ENCODE measurements at regions of chr5 and their contacts with region 1.

Region 1: GRCh38 chr5:849651-850301 is 1.0 kb downstream of the ZDHHC11 start:
- DNase-seq: peak in 4 of 5 donors; percentile 46 to 74 (median 47)
- ATAC-seq: peak; percentile 58 to 88 (median 88)
- H3K4me3 ChIP-seq: peak overlapping the region in 9 of 12 donors; percentile 11 to 42 (median 32)
- H3K27ac ChIP-seq: peak overlapping the region in 5 of 12 donors; percentile 10 to 47 (median 22)
- H3K4me1 ChIP-seq: peaks cover 0 to 11% (median 0%) of the 10 kb centered on the region in 12 donors
- H3K27me3 ChIP-seq: peaks cover 0 to 17% (median 0%) of the 10 kb centered on the region in 9 donors
- CTCF ChIP-seq: no peak
- POLR2A ChIP-seq: no peak

Region 2: DNA sequence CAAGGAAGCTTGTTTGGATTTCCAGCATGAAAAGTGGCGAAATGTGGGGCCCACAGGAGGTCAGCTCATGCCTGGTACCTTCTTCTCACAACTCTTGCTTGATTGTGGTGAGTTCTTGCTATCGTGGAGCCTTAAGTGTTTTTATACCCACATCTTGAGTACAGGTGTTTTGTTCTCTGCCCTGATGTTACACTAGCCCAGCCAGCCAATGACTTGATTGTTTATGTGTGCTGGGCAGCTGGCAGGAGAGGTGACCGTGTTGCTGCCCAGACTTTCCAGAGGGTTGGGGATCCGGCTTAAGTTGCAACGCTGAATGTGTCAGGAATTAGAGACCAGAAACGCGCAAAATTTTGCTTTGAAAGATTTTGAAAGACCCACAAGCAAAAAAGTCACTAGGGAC is 132.6 kb before region 1 on chr5:
- intact Hi-C with region 1: no loop called
- DNase-seq: no peak
- ATAC-seq: no peak
- H3K4me3 ChIP-seq: no peak overlapping the region
- H3K27ac ChIP-seq: no peak overlapping the region
- H3K4me1 ChIP-seq: no peaks in the 10 kb centered on the region
- H3K27me3 ChIP-seq: no peaks in the 10 kb centered on the region
- CTCF ChIP-seq: no peak
- POLR2A ChIP-seq: no peak

Region 3: DNA sequence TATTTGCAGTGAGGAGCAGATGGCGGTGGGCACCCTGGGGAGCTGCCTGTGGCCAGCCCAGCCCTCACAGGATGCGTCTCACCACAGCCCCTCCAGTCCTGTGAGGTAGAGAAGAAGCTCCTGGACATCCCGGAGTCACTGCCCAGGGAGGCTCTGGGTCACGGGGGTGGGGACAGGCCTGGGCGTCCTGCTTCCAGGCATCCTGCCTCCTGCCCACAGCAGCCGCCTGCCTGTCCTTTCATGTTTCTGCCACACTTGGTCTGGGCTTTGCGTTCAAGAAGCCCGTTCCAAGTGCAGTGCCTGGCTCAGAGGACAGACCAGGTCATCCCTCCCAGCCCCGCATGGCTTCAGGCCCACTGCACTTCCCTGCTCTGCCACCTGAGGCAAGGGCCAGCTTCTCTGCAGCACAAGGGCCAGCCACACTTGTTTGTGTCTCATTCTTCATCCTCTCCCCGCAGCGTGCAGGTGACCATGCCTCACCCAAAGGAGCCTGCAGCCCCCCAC is 103.5 kb before region 1 on chr5:
- intact Hi-C with region 1: loop called in 4 of 10 experiments (anchors 5 to 10 kb)
- DNase-seq: peak in 3 of 5 donors; percentile 68 to 77 (median 68)
- ATAC-seq: peak; percentile 45 to 87 (median 73)
- H3K4me3 ChIP-seq: no peak overlapping the region
- H3K27ac ChIP-seq: peak overlapping the region in 5 of 12 donors; percentile 2 to 70 (median 53)
- H3K4me1 ChIP-seq: peaks cover 0 to 12% (median 0%) of the 10 kb centered on the region in 12 donors
- H3K27me3 ChIP-seq: no peaks in the 10 kb centered on the region
- CTCF ChIP-seq: peak in 6 of 12 donors; percentile 9 to 49 (median 34)
- POLR2A ChIP-seq: no peak

Region 4: DNA sequence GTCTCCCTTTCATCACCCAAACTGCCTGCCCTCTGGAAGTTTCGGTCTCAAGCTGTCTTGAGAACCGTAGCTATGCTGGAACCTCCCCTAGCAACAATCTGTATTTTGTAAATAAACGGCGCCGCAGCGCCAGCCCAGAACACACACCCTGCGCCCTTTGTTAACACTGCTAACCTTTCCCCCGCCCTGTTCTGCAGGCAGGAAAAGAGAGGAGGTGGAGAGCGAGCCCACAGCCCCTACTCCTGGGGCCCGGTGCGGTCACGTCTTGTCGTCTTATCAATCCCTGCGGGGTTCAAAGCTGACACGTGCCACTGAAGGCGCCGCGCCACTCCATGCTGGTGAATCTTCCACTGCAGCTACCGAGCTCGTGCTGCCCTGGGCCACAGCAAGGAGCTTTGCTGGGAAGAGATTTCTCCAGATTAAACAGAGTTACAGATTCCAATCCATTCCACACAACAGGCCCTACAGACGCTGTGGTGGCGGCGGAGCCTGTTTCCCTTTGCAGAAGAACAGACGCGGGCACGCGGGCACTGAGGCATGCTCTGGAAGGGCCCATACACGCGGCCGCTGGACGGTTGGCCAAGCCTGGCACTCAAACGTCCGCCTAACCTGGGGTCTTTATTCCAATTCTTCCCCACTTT is 90.5 kb before region 1 on chr5:
- intact Hi-C with region 1: loop called in 8 of 10 experiments (anchors 1 to 10 kb)
- DNase-seq: peak; percentile 82 to 96 (median 89)
- ATAC-seq: peak; percentile 68 to 82 (median 72)
- H3K4me3 ChIP-seq: peak overlapping the region in 10 of 12 donors; percentile 2 to 38 (median 20)
- H3K27ac ChIP-seq: peak overlapping the region; percentile 29 to 95 (median 83)
- H3K4me1 ChIP-seq: peaks cover 5 to 61% (median 37%) of the 10 kb centered on the region in 12 donors
- H3K27me3 ChIP-seq: no peaks in the 10 kb centered on the region
- CTCF ChIP-seq: peak in 4 of 12 donors; percentile 5 to 35 (median 13)
- POLR2A ChIP-seq: peak in 1 of 2 donors; percentile 25